Right ventricle myocardium inferior (tissue), 1 donor: ENCODE measurements at regions of chr20 and their contacts with region 1.

Region 1: GRCh38 chr20:34215711-34216381 is 25.4 kb upstream of the ASIP start:
- DNase-seq: peak; percentile 92
- ATAC-seq: peak; percentile 96

Region 2: GRCh38 chr20:34262488-34263288 is 46.8 kb after region 1 on chr20:
- intact Hi-C with region 1: loop called (anchors 5 kb)
- DNase-seq: no peak
- ATAC-seq: peak; percentile 92

Region 3: GRCh38 chr20:34365765-34366251 is 150.0 kb after region 1 on chr20:
- intact Hi-C with region 1: no loop called
- DNase-seq: no peak
- ATAC-seq: no peak